Naive thymus-derived CD4-positive, alpha-beta T cell (primary cell): ENCODE measurements at regions of chrX and their contacts with region 1.

Region 1: GRCh38 chrX:107741404-107741790 is 34.2 kb downstream of the TSC22D3 start:
- DNase-seq: peak in 1 of 9 donors; percentile 10
- ATAC-seq: no peak
- H3K4me3 ChIP-seq: peak overlapping the region; percentile 45
- H3K4me3 Mint-ChIP-seq: peak overlapping the region; percentile 80 to 96 (median 85)
- H3K27ac ChIP-seq: peak overlapping the region; percentile 72
- H3K27ac Mint-ChIP-seq: peak overlapping the region; percentile 94 to 100 (median 99)
- H3K4me1 ChIP-seq: peaks cover 26 to 45% of the 10 kb centered on the region in 2 donors
- H3K4me1 Mint-ChIP-seq: peaks cover 15 to 70% (median 45%) of the 10 kb centered on the region in 7 donors
- H3K27me3 ChIP-seq: no peaks in the 10 kb centered on the region
- H3K27me3 Mint-ChIP-seq: peaks cover 0 to 7% (median 0%) of the 10 kb centered on the region in 5 donors

Region 2: GRCh38 chrX:107292711-107293495 is 448.5 kb before region 1 on chrX:
- CTCF ChIA-PET with region 1: no interaction called
- POLR2A ChIA-PET with region 1: no interaction called
- intact Hi-C with region 1: no loop called
- DNase-seq: no peak
- ATAC-seq: no peak
- H3K4me3 ChIP-seq: no peak overlapping the region
- H3K4me3 Mint-ChIP-seq: no peak overlapping the region
- H3K27ac ChIP-seq: no peak overlapping the region
- H3K27ac Mint-ChIP-seq: no peak overlapping the region
- H3K4me1 ChIP-seq: no peaks in the 10 kb centered on the region
- H3K4me1 Mint-ChIP-seq: no peaks in the 10 kb centered on the region
- H3K27me3 ChIP-seq: peaks cover 0 to 3% of the 10 kb centered on the region in 2 donors
- H3K27me3 Mint-ChIP-seq: peaks cover 0 to 24% (median 10%) of the 10 kb centered on the region in 5 donors

Region 3: DNA sequence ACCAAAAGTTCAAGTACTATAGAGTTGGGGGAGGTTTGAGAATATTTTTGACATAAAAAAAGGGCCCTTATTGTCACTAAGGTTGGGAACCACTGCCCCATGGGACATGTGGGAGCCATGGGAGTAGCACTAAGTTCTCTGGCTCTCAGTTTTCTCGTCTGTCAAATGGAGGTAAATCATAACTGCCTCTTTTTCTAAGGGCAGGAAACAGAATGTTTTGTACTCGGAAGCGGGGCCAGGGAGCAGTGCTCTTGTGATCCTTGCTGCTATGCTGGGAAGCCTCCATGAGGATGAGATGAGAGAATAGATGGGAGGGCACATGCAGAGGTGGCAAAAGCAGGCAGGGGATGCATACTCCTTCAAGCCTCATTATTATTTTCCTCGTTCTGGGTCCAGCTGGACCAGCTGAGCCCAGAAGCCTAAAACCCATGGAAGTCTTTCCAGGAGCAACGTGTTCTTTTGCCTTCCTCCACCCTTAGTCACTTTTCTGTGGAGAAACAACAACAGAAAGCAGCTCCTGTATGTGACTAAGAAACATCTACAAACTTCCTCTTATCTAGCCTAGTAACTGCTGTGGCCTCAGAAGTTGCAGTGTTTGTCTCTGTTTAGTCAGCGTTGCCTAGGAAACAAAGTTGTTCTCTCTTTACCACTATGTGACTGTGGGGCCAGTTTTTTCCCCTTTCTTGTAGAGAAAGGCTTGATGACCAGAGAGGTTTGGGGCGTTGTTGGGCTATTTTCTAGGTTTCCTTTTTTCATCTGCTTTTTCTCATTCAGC is 30.6 kb before region 1 on chrX:
- CTCF ChIA-PET with region 1: interaction called, 21 read pairs
- POLR2A ChIA-PET with region 1: interaction called, 142 read pairs
- intact Hi-C with region 1: no loop called
- DNase-seq: peak; percentile 6 to 92 (median 84)
- ATAC-seq: peak; percentile 55
- H3K4me3 ChIP-seq: peak overlapping the region; percentile 49
- H3K4me3 Mint-ChIP-seq: peak overlapping the region; percentile 61 to 94 (median 78)
- H3K27ac ChIP-seq: peak overlapping the region; percentile 100
- H3K27ac Mint-ChIP-seq: peak overlapping the region; percentile 97 to 100 (median 99)
- H3K4me1 ChIP-seq: peaks cover 42 to 43% of the 10 kb centered on the region in 2 donors
- H3K4me1 Mint-ChIP-seq: peaks cover 24 to 75% (median 62%) of the 10 kb centered on the region in 7 donors
- H3K27me3 ChIP-seq: no peaks in the 10 kb centered on the region
- H3K27me3 Mint-ChIP-seq: peaks cover 0 to 3% (median 0%) of the 10 kb centered on the region in 5 donors

Region 4: GRCh38 chrX:107755721-107756120 is 14.3 kb after region 1 on chrX:
- CTCF ChIA-PET with region 1: interaction called, 3 read pairs
- POLR2A ChIA-PET with region 1: interaction called, 12 read pairs
- intact Hi-C with region 1: no loop called
- DNase-seq: no peak
- ATAC-seq: no peak
- H3K4me3 ChIP-seq: no peak overlapping the region
- H3K4me3 Mint-ChIP-seq: peak overlapping the region in 1 of 10 donors; percentile 37
- H3K27ac ChIP-seq: no peak overlapping the region
- H3K27ac Mint-ChIP-seq: peak overlapping the region in 5 of 9 donors; percentile 19 to 75 (median 23)
- H3K4me1 ChIP-seq: peaks cover 0 to 8% of the 10 kb centered on the region in 2 donors
- H3K4me1 Mint-ChIP-seq: peaks cover 0 to 38% (median 27%) of the 10 kb centered on the region in 7 donors
- H3K27me3 ChIP-seq: no peaks in the 10 kb centered on the region
- H3K27me3 Mint-ChIP-seq: no peaks in the 10 kb centered on the region